ENCODE measurements at regions of chr6 and their contacts with region 1.

Region 1: DNA sequence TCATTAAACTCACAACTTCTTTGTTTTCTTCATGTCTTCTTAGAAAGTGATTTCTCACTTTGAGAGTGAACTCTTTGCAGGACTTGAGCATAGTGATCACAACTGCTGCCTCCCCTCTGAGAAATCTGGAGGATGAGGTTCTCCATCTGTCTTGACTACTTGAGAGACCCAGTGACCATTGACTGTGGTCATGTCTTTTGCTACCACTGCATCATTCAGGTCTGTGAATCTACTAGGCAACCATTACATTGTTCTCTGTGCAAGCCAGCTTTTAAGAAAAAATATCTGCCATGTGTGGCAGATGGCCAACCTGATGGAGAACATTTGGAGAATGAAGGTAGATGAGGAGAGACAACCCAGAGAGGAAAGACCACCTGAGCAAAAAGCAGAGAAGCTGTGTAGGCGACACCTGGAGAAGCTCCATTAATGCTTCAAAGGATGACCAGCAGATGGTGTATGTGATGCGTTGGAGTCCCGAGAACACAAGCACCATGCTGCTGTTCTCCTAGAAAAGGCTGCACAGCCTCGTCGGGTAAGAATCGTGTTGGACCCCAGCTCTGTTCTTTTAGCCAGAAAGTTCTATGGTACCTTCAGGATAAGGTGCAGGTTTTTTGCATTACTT is 25.1 kb upstream of the TRIM26 start:
- DNase-seq: peak in 1 of 2 donors; percentile 26
- H3K4me3 ChIP-seq: no peak overlapping the region
- H3K27ac ChIP-seq: no peak overlapping the region
- H3K4me1 ChIP-seq: no peaks in the 10 kb centered on the region
- H3K27me3 ChIP-seq: no peaks in the 10 kb centered on the region
- CTCF ChIP-seq: no peak
- EP300 ChIP-seq: no peak
- POLR2A ChIP-seq: no peak

Region 2: DNA sequence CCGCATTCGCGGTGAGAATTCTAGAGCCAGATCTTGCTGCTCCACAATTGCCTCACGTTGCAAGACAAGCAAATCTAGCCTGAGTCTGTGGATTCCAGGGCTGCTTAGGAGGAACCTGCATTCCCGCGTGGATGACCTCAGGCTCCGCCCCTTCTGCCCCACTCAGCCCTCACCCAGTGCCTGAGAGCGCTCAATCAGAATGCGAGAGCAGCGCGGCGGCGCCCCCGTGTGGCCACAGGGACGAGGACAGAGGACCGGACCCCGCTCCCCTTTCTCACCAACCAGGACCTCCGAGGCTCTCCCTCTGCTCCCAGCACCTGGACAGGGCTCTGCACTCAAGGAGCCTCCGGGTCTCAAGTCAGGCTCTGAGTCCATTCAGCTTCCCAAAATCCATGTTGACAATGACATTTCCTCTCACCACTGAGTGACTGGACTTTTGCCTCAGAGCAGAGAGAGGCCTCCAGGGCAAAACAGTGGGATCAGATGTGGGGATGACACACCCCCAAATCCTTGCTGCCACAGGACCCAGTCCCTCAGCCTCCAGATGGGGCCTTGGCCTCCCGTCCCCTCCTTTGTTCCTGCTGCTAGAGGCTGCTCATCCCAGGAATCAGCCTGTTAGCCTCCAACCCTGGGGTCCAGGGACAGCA is 158.7 kb after region 1 on chr6:
- intact Hi-C with region 1: loop called (anchors 10 kb)
- DNase-seq: peak; percentile 88 to 89
- H3K4me3 ChIP-seq: no peak overlapping the region
- H3K27ac ChIP-seq: no peak overlapping the region
- H3K4me1 ChIP-seq: peaks cover 0 to 6% (median 5%) of the 10 kb centered on the region in 4 donors
- H3K27me3 ChIP-seq: peaks cover 0 to 53% (median 5%) of the 10 kb centered on the region in 3 donors
- CTCF ChIP-seq: peak in 5 of 7 experiments; percentile 75 to 84 (median 78)
- EP300 ChIP-seq: no peak
- POLR2A ChIP-seq: no peak